Activated CD4-positive, alpha-beta memory T cell treated with anti-CD3 and anti-CD28 coated beads for 36 hours (primary cell): ENCODE measurements at regions of chr6 and their contacts with region 1.

Region 1: GRCh38 chr6:24581084-24581669 is 64.8 kb downstream of the KIAA0319 start:
- DNase-seq: peak; percentile 85
- H3K4me3 Mint-ChIP-seq: no peak overlapping the region
- H3K27ac Mint-ChIP-seq: no peak overlapping the region
- H3K4me1 Mint-ChIP-seq: peaks cover 2% of the 10 kb centered on the region
- H3K27me3 Mint-ChIP-seq: no peaks in the 10 kb centered on the region

Region 2: GRCh38 chr6:24547243-24547642 is 33.9 kb before region 1 on chr6:
- CTCF ChIA-PET with region 1: interaction called, 13 read pairs
- POLR2A ChIA-PET with region 1: no interaction called
- intact Hi-C with region 1: no loop called
- DNase-seq: peak; percentile 72
- H3K4me3 Mint-ChIP-seq: no peak overlapping the region
- H3K27ac Mint-ChIP-seq: no peak overlapping the region
- H3K4me1 Mint-ChIP-seq: peaks cover 6% of the 10 kb centered on the region
- H3K27me3 Mint-ChIP-seq: peaks cover 7% of the 10 kb centered on the region

Region 3: GRCh38 chr6:24636681-24637080 is 55.5 kb after region 1 on chr6:
- CTCF ChIA-PET with region 1: interaction called, 17 read pairs
- POLR2A ChIA-PET with region 1: no interaction called
- intact Hi-C with region 1: no loop called
- DNase-seq: no peak
- H3K4me3 Mint-ChIP-seq: no peak overlapping the region
- H3K27ac Mint-ChIP-seq: no peak overlapping the region
- H3K4me1 Mint-ChIP-seq: peaks cover 3% of the 10 kb centered on the region
- H3K27me3 Mint-ChIP-seq: peaks cover 12% of the 10 kb centered on the region

Region 4: GRCh38 chr6:24683297-24684296 is 102.4 kb after region 1 on chr6:
- CTCF ChIA-PET with region 1: interaction called, 62 read pairs
- POLR2A ChIA-PET with region 1: no interaction called
- intact Hi-C with region 1: no loop called
- DNase-seq: no peak
- H3K4me3 Mint-ChIP-seq: no peak overlapping the region
- H3K27ac Mint-ChIP-seq: no peak overlapping the region
- H3K4me1 Mint-ChIP-seq: no peaks in the 10 kb centered on the region
- H3K27me3 Mint-ChIP-seq: no peaks in the 10 kb centered on the region

Region 5: GRCh38 chr6:24766680-24767462 is 185.7 kb after region 1 on chr6:
- CTCF ChIA-PET with region 1: interaction called, 117 read pairs
- POLR2A ChIA-PET with region 1: no interaction called
- intact Hi-C with region 1: loop called (anchors 1 kb)
- DNase-seq: no peak
- H3K4me3 Mint-ChIP-seq: no peak overlapping the region
- H3K27ac Mint-ChIP-seq: no peak overlapping the region
- H3K4me1 Mint-ChIP-seq: peaks cover 4% of the 10 kb centered on the region
- H3K27me3 Mint-ChIP-seq: no peaks in the 10 kb centered on the region

Region 6: GRCh38 chr6:25697537-25698345 is 1116.6 kb after region 1 on chr6:
- CTCF ChIA-PET with region 1: no interaction called
- POLR2A ChIA-PET with region 1: no interaction called
- intact Hi-C with region 1: no loop called
- DNase-seq: no peak
- H3K4me3 Mint-ChIP-seq: no peak overlapping the region
- H3K27ac Mint-ChIP-seq: no peak overlapping the region
- H3K4me1 Mint-ChIP-seq: no peaks in the 10 kb centered on the region
- H3K27me3 Mint-ChIP-seq: peaks cover 6% of the 10 kb centered on the region